ENCODE measurements at regions of chr12 and their contacts with region 1.

Region 1: DNA sequence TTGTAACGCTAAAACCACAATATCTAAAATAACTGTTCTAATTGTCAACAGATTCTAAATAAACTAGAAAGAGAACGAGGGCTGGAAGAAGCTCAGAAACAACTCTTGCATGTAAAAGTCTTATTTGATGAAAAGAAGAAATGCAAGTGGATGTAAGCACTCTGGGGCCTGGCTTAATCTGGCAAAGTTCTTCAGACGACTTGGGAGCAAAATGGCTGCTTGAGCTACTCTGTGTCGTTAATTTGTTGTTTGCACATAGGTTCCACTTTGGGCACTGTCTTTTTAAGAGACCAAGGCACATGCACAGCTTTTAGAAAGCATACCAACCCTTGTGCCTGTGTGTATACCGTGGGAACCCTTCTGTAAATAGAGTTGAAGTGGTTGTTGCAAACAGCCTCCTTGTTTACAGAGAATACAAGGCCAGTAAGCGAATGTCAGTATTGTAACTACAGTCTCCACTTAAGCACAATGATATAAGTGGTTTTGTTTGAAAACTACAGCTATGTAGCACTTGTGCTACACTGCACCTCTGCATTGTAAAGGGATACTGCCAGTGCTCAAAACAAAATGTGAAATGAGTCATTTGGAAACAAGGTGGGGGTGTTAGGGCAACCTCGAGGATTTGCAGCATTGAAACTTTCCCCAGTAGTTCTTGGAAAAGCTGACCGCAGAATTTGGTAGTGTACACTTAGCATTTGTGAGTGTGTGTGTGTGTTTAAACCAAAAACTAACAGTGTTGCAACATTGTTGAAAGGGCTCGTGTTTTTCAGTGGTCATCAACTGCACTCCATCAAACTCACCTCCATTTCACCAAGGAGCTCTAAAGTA is 154.3 kb downstream of the CEP83 start:
- DNase-seq: peak; percentile 79
- ATAC-seq: peak; percentile 92
- H3K4me3 Mint-ChIP-seq: peak overlapping the region; percentile 40
- H3K27ac Mint-ChIP-seq: peak overlapping the region; percentile 75
- H3K4me1 Mint-ChIP-seq: peaks cover 48% of the 10 kb centered on the region
- H3K27me3 Mint-ChIP-seq: peaks cover 1% of the 10 kb centered on the region
- CTCF ChIP-seq: no peak

Region 2: GRCh38 chr12:94262228-94263010 is 42.9 kb before region 1 on chr12:
- CTCF ChIA-PET with region 1: interaction called, 3 read pairs
- POLR2A ChIA-PET with region 1: interaction called, 10 read pairs
- intact Hi-C with region 1: loop called (anchors 5 kb)
- DNase-seq: peak; percentile 90
- ATAC-seq: peak; percentile 81
- H3K4me3 Mint-ChIP-seq: peak overlapping the region; percentile 88
- H3K27ac Mint-ChIP-seq: peak overlapping the region; percentile 99
- H3K4me1 Mint-ChIP-seq: peaks cover 40% of the 10 kb centered on the region
- H3K27me3 Mint-ChIP-seq: no peaks in the 10 kb centered on the region
- CTCF ChIP-seq: no peak

Region 3: DNA sequence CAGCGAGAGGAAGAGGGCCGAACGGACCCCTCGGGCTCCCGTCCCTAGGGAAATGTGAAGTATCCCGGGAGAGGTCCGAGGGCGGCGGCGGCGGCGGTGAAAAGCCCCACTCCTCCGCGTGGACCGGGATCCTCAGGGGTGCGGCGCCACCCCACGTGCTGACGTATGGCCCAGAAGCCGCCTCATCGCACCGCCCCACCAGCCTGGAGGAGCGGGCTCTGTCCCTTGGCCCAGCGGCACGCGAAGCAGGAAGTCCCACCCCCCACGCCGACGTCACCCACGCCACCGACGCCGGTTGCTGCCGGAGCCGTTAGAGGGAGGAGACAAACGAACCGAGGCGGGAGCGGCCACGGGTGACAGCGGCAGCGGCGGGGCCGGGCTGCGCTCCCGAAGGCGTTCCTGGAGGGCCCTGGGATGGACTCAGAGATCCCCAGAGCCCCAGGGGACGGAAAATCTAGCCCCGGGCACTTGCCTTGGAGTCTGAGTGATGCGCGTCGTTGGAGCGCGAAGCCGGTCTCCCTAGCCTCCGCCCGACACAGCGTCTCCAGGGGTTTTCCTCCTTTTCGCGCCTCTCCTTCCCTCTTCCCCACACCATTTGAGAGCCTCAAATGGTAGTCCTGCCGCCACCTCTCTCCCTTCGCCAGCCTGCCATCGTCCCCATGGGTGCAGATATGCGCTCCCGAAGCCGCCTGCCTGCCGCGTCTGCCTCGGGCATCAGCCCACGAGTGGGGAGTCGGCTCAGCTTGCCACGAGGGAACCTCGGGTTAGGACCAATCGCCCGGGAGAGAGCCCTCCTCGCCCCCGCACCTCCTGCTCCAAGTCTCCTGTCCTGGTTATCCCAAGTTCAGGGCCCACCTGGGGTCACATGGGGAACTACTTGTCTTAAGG is 154.6 kb after region 1 on chr12 and contains the start of gene CEP83:
- CTCF ChIA-PET with region 1: no interaction called
- POLR2A ChIA-PET with region 1: interaction called, 5 read pairs
- intact Hi-C with region 1: loop called (anchors 2 kb)
- DNase-seq: peak; percentile 98
- ATAC-seq: peak; percentile 98
- H3K4me3 Mint-ChIP-seq: peak within 1 kb of the TSS; percentile 87
- H3K27ac Mint-ChIP-seq: peak within 1 kb of the TSS; percentile 92
- H3K4me1 Mint-ChIP-seq: peaks cover 29% of the 10 kb centered on the region
- H3K27me3 Mint-ChIP-seq: peaks cover 2% of the 10 kb centered on the region
- CTCF ChIP-seq: no peak
- total RNA-seq, gene CEP83: 23.5 to 26.5 TPM

Region 4: GRCh38 chr12:94525951-94526350 is 220.6 kb after region 1 on chr12:
- CTCF ChIA-PET with region 1: no interaction called
- POLR2A ChIA-PET with region 1: no interaction called
- intact Hi-C with region 1: loop called (anchors 10 kb)
- DNase-seq: peak; percentile 17
- ATAC-seq: peak; percentile 30
- H3K4me3 Mint-ChIP-seq: no peak overlapping the region
- H3K27ac Mint-ChIP-seq: no peak overlapping the region
- H3K4me1 Mint-ChIP-seq: peaks cover 3% of the 10 kb centered on the region
- H3K27me3 Mint-ChIP-seq: peaks cover 3% of the 10 kb centered on the region
- CTCF ChIP-seq: no peak

Region 5: GRCh38 chr12:94805749-94806529 is 500.6 kb after region 1 on chr12:
- CTCF ChIA-PET with region 1: no interaction called
- POLR2A ChIA-PET with region 1: no interaction called
- intact Hi-C with region 1: no loop called
- DNase-seq: no peak
- ATAC-seq: no peak
- H3K4me3 Mint-ChIP-seq: no peak overlapping the region
- H3K27ac Mint-ChIP-seq: no peak overlapping the region
- H3K4me1 Mint-ChIP-seq: no peaks in the 10 kb centered on the region
- H3K27me3 Mint-ChIP-seq: peaks cover 1% of the 10 kb centered on the region
- CTCF ChIP-seq: no peak